MCF 10A (cell line): ENCODE measurements at regions of chr1 and their contacts with region 1.

Region 1: GRCh38 chr1:113389953-113390834 is at the start of gene MAGI3:
- DNase-seq: peak; percentile 98
- H3K4me3 Mint-ChIP-seq: peak within 1 kb of the TSS; percentile 93
- H3K27ac Mint-ChIP-seq: peak within 1 kb of the TSS; percentile 76
- H3K4me1 Mint-ChIP-seq: peaks cover 14% of the 10 kb centered on the region
- H3K27me3 Mint-ChIP-seq: no peaks in the 10 kb centered on the region
- CTCF ChIP-seq: no peak
- total RNA-seq, gene MAGI3: 12.8 and 14.3 TPM in 2 replicates

Region 2: GRCh38 chr1:113307771-113308445 is 82.3 kb before region 1 on chr1:
- CTCF ChIA-PET with region 1: interaction called, 5 read pairs
- POLR2A ChIA-PET with region 1: interaction called, 6 read pairs
- intact Hi-C with region 1: loop called (anchors 5 kb)
- DNase-seq: peak; percentile 78
- H3K4me3 Mint-ChIP-seq: peak overlapping the region; percentile 21
- H3K27ac Mint-ChIP-seq: peak overlapping the region; percentile 87
- H3K4me1 Mint-ChIP-seq: peaks cover 23% of the 10 kb centered on the region
- H3K27me3 Mint-ChIP-seq: no peaks in the 10 kb centered on the region
- CTCF ChIP-seq: no peak

Region 3: DNA sequence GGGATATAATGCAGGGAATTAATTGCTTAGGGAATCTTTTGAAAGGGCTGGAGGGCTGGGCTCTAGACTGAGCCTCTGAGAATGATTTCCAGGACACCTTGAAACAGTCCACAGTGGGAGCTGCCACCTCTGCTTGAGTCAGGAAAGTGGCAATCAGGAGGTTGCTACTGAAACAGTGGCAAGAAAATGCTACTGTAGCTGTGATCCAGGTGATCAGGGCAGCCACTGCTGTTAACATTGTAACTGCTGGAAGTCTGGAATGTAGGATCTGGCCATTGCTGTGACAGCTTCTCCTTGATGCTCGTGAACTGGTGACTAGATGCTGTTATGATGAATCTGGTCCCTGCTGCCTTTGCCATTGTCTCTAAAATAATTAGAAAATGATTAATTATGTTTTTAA is 12.9 kb after region 1 on chr1:
- CTCF ChIA-PET with region 1: interaction called, 5 read pairs
- POLR2A ChIA-PET with region 1: interaction called, 53 read pairs
- intact Hi-C with region 1: no loop called
- DNase-seq: no peak
- H3K4me3 Mint-ChIP-seq: no peak overlapping the region
- H3K27ac Mint-ChIP-seq: no peak overlapping the region
- H3K4me1 Mint-ChIP-seq: peaks cover 17% of the 10 kb centered on the region
- H3K27me3 Mint-ChIP-seq: no peaks in the 10 kb centered on the region
- CTCF ChIP-seq: no peak

Region 4: DNA sequence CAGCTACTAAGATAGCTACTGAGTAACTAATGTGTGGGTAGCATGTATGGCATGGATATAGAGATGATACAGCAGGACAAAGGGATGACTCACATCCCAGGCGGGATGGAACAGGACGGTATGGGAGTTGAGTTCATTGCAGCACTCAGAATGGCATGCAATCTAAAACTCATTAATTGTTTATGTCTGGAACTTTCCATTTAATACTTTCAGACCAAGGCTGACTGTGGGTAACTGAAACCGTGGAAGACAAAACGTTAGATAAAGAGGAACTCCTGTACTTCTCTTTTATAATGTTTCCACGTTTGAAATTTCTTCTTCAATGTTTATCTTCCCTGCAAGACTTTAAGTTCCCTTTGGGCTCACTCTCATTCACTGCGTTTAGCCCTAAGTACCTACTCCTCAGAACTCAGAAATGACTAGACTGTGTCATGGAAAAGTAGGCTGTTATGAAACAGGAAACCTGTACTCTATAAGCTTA is 152.1 kb after region 1 on chr1:
- CTCF ChIA-PET with region 1: interaction called, 3 read pairs
- POLR2A ChIA-PET with region 1: interaction called, 7 read pairs
- intact Hi-C with region 1: loop called (anchors 5 kb)
- DNase-seq: peak; percentile 87
- H3K4me3 Mint-ChIP-seq: no peak overlapping the region
- H3K27ac Mint-ChIP-seq: peak overlapping the region; percentile 80
- H3K4me1 Mint-ChIP-seq: peaks cover 37% of the 10 kb centered on the region
- H3K27me3 Mint-ChIP-seq: no peaks in the 10 kb centered on the region
- CTCF ChIP-seq: no peak

Region 5: DNA sequence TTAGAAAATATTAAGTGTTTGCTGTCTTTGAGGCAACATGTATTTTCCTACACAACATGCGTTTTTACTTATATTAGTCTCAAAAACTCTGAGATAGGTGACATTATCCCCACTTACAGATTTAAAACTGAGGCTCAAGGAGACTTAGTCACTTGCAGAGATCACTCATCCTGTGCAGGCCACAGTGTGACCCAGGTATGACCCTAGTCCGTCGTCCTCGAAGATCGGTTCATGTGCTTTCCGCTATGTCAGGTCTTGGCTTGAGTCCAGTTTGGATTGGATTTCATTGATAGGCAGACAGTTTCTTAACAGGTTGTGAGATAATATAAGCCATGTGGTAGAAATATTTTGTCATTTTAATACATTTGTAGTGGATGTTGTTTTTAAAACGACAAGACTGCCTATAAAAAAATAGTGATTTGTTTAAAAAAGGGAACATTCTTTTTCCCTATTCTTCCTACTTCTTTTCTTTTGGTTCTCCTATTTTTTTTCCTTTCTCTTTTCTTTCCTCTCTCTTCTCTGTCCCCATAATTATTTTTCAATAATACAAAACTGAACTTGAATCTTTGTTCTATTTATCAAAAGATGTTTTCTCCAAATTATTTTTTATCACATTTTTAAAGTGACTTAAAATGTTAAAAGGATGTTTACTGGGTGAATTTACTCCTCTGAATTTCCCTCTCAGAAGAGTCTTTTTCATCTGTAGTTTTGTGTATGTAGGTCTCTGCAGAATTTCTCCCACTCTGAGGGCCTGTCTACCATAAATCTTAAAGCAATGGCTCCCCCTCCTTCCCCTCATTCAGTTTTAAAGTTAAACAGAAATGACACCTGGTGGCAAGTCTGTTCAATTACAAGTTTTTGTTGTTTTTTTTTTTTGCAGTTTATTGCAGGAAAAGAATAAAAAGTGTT is 287.3 kb after region 1 on chr1:
- CTCF ChIA-PET with region 1: interaction called, 3 read pairs
- POLR2A ChIA-PET with region 1: interaction called, 8 read pairs
- intact Hi-C with region 1: loop called (anchors 2 kb)
- DNase-seq: peak; percentile 52
- H3K4me3 Mint-ChIP-seq: no peak overlapping the region
- H3K27ac Mint-ChIP-seq: peak overlapping the region; percentile 61
- H3K4me1 Mint-ChIP-seq: peaks cover 16% of the 10 kb centered on the region
- H3K27me3 Mint-ChIP-seq: no peaks in the 10 kb centered on the region
- CTCF ChIP-seq: peak; percentile 50